Motor neuron (in vitro differentiated cells): ENCODE measurements at regions of chr9 and their contacts with region 1.

Region 1: GRCh38 chr9:18890372-18890771 is 142.6 kb downstream of the SAXO1 start:
- ATAC-seq: peak in 2 of 8 experiments; percentile 12 to 31
- H3K4me3 ChIP-seq: no peak overlapping the region
- H3K27ac ChIP-seq: no peak overlapping the region
- H3K4me1 ChIP-seq: no peaks in the 10 kb centered on the region

Region 2: DNA sequence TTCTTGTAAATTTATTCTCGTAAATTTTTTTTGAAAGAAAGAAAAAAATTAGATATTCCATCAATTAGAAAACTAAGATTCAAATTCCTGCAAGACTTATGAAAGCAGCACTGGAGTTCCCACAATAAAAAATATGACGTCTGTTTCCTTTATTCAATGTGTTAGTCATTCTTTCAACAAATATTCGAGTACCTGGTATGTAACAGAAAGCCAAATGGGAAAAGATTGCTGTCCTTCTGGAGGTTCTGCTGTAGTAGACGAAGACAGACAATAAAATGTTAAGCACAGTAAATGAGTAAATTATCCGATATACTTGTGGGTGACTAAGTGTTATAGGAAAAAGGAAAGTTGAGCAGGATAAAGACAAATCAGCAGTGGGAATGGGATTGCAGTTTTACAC is 324.3 kb before region 1 on chr9:
- in situ Hi-C with region 1: no loop called
- ATAC-seq: peak in 1 of 8 experiments; percentile 72
- H3K4me3 ChIP-seq: no peak overlapping the region
- H3K27ac ChIP-seq: no peak overlapping the region
- H3K4me1 ChIP-seq: peaks cover 0 to 5% of the 10 kb centered on the region in 2 donors

Region 3: DNA sequence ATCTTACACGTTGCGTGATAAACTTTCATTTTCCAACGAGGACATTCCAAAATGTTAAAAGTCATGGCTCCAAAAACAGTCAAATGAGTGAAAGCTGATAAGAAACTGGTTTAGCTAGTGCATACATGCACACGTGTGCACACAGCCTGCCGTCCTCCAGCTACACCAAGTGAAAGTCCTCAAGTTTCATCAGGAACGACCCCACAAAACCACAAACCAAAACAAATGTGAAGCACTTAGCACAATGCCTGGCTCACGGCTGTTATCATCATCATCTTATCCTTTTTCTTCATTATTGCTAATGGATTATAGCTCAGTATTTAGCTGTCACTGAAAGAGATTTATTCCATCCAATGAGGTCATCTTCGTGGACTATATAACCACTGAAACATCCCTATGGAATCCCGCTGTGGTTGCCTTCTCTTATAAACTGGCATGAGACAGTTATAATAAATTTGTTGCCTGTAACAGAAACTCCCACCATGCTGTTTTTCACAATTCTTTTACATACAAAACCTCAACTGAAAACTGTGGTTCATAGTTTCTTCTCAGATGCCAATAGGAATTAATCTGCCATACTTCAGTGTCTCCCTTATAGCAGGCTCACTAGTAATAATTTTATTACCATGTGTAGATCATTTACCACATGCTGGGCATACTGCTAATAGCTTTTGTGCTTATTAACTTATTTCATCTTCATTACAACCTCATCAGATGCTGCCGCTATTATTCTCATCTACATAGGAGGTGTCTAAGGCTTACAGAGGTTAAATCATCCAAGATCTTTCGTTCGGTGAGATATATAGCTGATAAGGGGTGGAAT is 86.5 kb after region 1 on chr9:
- in situ Hi-C with region 1: loop called in 1 of 9 experiments (anchors 25 kb)
- ATAC-seq: peak in 7 of 8 experiments; percentile 7 to 93 (median 72)
- H3K4me3 ChIP-seq: no peak overlapping the region
- H3K27ac ChIP-seq: no peak overlapping the region
- H3K4me1 ChIP-seq: peaks cover 0 to 4% of the 10 kb centered on the region in 2 donors